ENCODE measurements at regions of chr22 and their contacts with region 1.

Region 1: DNA sequence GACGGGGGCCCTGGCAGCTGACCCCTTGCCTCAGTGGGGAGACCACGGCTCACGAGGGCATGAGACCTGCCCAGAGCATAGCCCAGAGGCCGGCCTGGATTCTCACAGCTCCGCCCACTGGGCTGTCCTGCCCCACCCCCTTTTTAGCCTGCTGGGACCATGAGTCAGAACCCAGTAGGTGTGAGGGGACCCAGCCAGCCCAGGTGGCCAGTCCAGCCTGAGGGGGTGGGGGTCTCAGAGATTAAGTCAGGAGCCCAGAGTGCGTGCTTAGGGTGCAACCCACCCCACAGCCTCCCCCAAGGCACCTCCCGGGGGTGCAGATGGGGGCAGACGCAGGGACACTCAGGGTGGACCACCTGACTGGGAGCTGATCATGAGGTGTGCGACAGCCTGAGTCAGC is 40.1 kb upstream of the PPARA start:
- DNase-seq: no peak
- H3K4me3 ChIP-seq: no peak overlapping the region
- H3K27ac ChIP-seq: peak overlapping the region; percentile 99 to 100
- H3K4me1 ChIP-seq: peaks cover 52 to 58% of the 10 kb centered on the region in 2 donors
- H3K27me3 ChIP-seq: no peaks in the 10 kb centered on the region
- CTCF ChIP-seq: no peak
- POLR2A ChIP-seq: no peak

Region 2: DNA sequence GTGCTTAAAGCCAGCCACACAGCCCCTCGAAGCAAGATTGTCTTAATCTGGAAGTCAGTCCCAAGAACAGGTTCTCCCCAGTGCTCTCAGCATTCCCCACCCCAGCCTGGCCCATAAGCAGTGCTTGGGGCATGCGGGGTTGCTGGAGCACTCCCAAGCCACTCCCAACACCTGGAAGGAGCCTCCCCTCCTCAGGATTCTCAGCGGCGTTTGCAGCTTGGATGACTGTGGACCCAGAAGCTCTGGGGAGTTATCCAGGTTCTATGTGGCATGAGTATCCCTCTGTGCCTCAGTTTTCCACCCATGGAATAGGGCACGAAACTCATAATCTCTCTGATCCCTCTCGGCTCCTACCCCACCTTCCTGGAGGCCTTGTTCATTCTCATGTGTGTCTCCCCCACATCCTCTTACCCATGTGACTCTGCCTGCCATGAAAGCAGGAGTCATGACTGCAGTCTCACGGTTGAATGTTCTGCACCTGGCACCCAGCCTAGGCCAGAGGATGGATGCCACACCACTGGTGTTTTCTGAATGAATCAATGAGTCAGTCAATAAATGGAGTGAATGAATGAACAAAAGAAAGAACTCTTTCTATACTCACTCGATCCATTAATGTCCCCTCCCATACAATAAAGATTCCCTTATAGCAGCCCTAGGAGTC is 99.9 kb before region 1 on chr22:
- intact Hi-C with region 1: loop called (anchors 2 kb)
- DNase-seq: no peak
- H3K4me3 ChIP-seq: no peak overlapping the region
- H3K27ac ChIP-seq: peak overlapping the region in 1 of 2 donors; percentile 37
- H3K4me1 ChIP-seq: peaks cover 22 to 26% of the 10 kb centered on the region in 2 donors
- H3K27me3 ChIP-seq: no peaks in the 10 kb centered on the region
- CTCF ChIP-seq: no peak
- POLR2A ChIP-seq: no peak

Region 3: GRCh38 chr22:46696229-46696518 is 586.0 kb after region 1 on chr22:
- intact Hi-C with region 1: no loop called
- DNase-seq: no peak
- H3K4me3 ChIP-seq: no peak overlapping the region
- H3K27ac ChIP-seq: no peak overlapping the region
- H3K4me1 ChIP-seq: no peaks in the 10 kb centered on the region
- H3K27me3 ChIP-seq: no peaks in the 10 kb centered on the region
- CTCF ChIP-seq: no peak
- POLR2A ChIP-seq: no peak

Region 4: GRCh38 chr22:47143249-47143938 is 1033.2 kb after region 1 on chr22:
- intact Hi-C with region 1: loop called (anchors 5 kb)
- DNase-seq: peak in 1 of 2 donors; percentile 21
- H3K4me3 ChIP-seq: no peak overlapping the region
- H3K27ac ChIP-seq: no peak overlapping the region
- H3K4me1 ChIP-seq: peaks cover 0 to 4% of the 10 kb centered on the region in 2 donors
- H3K27me3 ChIP-seq: no peaks in the 10 kb centered on the region
- CTCF ChIP-seq: no peak
- POLR2A ChIP-seq: no peak